A549 (cell line): ENCODE measurements at regions of chr11 and their contacts with region 1.

Region 1: GRCh38 chr11:130213143-130213978 is 53.8 kb downstream of the ST14 start:
- DNase-seq: peak; percentile 20 to 58
- ATAC-seq: peak; percentile 65 to 93; a peak in 5 of 6 replicates
- H3K4me3 ChIP-seq: no peak overlapping the region
- H3K27ac ChIP-seq: peak overlapping the region; percentile 56 to 69; a peak in 3 of 6 replicates
- H3K4me1 ChIP-seq: no peaks in the 10 kb centered on the region
- CTCF ChIP-seq: peak; percentile 75
- EP300 ChIP-seq: no peak
- POLR2A ChIP-seq: no peak
- RAD21 ChIP-seq: peak; percentile 84 to 89

Region 2: DNA sequence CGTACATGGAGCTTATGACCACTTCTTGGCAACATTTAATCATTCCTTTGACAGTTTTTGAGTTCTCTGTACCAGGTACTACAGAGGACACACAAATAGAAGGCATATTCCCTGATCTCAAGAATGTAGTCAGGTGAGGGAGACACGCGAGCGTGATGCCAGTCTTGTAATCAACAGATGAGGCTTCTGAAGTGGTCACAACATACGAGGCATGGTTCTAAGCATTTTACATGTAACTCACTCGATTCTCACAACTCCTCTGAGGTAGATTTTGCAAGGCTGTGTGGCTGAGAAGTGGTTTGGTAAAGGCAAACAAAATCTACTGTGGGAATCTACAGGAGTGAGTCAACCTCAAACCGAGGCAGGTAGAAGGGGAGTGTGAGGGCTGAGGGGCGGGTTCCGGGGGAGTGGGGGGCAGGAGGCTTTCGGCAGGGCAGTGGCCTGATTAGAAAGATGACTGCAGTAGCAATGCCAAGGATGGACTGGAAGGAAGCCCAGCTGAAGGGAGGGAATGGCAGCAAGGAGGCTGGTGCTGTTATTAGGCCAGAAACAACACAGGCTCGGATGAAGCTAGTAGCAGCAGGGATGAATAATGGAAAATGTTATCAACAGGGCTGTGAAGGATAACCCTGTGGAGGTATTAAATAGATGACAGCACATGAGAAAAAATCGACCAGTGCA is 10.1 kb after region 1 on chr11:
- CTCF ChIA-PET with region 1: interaction called, 11 read pairs
- POLR2A ChIA-PET with region 1: no interaction called
- DNase-seq: no peak
- ATAC-seq: no peak
- H3K4me3 ChIP-seq: no peak overlapping the region
- H3K27ac ChIP-seq: no peak overlapping the region
- H3K4me1 ChIP-seq: no peaks in the 10 kb centered on the region
- CTCF ChIP-seq: no peak
- EP300 ChIP-seq: no peak
- POLR2A ChIP-seq: no peak
- RAD21 ChIP-seq: no peak